ENCODE measurements at regions of chr6 and their contacts with region 1.

Region 1: GRCh38 chr6:24385536-24386269 is 17.0 kb upstream of the MRS2 start:
- DNase-seq: no peak

Region 2: DNA sequence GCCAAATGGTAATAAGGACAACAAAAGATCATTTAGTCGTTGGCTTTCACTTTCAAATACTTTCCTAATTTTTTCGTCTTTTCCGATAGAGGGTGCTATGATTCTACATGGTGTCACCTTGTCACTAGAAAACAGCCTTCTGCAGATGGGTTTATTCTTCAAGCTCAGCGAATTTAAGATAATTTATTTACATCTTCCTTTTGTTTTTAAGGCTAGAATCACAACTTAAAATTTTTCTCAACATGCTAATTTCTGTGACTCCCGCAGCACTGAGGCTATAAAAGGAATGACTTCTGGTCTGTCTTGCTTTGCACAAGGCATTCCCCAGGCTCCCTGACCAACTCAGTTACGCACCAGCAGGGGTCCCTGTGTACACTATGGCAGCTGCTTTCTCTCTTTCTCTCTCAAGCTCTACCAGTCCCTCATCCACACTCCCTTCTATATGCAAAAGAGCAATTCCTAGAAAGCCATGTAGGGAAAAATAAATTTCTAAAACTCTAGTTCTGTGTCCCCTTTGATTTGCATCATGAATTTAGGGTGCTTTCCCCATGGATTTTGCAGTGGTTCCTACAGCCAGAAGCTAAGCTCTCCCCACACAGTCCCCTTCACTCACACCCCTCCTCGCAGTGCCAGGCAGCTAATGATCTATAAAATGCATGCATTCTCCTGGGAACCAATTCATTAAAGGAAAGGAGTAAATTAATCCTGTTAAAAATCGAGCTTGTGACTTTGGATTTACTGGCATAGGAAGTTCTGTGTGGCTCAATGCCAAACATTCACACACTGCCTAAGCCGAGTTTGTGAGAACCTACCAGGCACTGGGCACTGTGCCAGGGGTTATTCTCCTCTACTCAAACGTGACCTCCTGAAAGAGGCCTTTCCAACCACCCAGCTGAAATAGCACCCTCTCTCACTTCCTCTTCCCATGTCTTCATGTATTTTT is 102.4 kb before region 1 on chr6:
- CTCF ChIA-PET with region 1: interaction called, 37 read pairs
- POLR2A ChIA-PET with region 1: interaction called, 7 read pairs
- DNase-seq: peak; percentile 81